ENCODE measurements at regions of chr17 and their contacts with region 1.

Region 1: GRCh38 chr17:39401412-39402243 is at the start of gene FBXL20:
- DNase-seq: peak; percentile 97
- ATAC-seq: peak; percentile 63
- H3K4me3 Mint-ChIP-seq: peak within 1 kb of the TSS; percentile 91
- H3K27ac Mint-ChIP-seq: peak within 1 kb of the TSS; percentile 92
- H3K4me1 Mint-ChIP-seq: peaks cover 48% of the 10 kb centered on the region
- H3K27me3 Mint-ChIP-seq: no peaks in the 10 kb centered on the region
- total RNA-seq, gene FBXL20: 16.9 to 18.9 TPM

Region 2: DNA sequence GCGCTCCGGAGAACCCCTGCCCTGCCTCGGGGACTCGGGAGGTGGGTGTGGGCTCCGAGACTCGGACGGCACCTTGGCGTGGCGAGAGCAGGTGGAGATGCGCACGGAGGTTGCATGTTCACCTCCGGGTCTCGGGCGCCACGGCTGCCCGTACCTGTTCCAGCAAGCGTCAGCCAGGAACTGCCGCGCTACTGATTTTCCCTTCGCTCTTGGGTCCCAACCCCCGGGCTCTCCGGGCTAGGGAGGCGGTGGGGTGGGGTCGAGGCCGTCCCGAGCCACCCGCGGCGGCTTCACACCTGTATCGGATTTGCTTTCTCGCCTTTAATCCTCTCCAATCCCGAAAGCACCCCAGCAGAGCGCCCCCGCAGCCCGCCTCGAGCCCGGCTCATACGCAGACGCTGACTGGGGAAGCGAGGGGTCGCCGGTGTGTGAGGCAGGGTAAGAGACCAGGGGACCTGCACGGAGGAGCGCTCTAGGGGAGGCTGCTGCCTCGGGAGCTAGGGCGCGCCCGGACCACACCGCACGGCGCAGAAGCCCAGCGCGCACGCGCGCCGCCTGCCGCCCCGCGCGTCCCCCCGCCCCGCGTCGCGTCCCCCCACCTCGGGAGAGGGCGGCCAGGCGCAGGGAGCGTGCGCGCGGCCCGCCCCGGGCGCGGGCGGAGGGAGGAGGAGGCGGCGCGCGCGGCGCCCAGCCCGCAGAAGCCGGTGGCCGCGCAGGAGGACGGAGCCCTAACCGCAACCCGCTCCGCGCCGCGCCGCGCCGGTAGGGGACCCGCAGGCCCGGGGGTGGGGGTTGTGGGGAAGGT is 1912.2 kb before region 1 on chr17 and contains the start of gene DUSP14:
- CTCF ChIA-PET with region 1: no interaction called
- POLR2A ChIA-PET with region 1: no interaction called
- intact Hi-C with region 1: loop called in 1 of 2 experiments (anchors 5 kb)
- DNase-seq: peak; percentile 88
- ATAC-seq: peak; percentile 74
- H3K4me3 Mint-ChIP-seq: peak within 1 kb of the TSS; percentile 88
- H3K27ac Mint-ChIP-seq: peak within 1 kb of the TSS; percentile 93
- H3K4me1 Mint-ChIP-seq: peaks cover 44% of the 10 kb centered on the region
- H3K27me3 Mint-ChIP-seq: no peaks in the 10 kb centered on the region
- total RNA-seq, gene DUSP14: 11.9 to 13.1 TPM

Region 3: GRCh38 chr17:39199820-39200069 is 201.9 kb before region 1 on chr17:
- CTCF ChIA-PET with region 1: interaction called, 3 read pairs
- POLR2A ChIA-PET with region 1: no interaction called
- intact Hi-C with region 1: loop called in 1 of 2 experiments (anchors 2 kb)
- DNase-seq: peak; percentile 95
- ATAC-seq: peak; percentile 69
- H3K4me3 Mint-ChIP-seq: peak overlapping the region; percentile 98
- H3K27ac Mint-ChIP-seq: peak overlapping the region; percentile 100
- H3K4me1 Mint-ChIP-seq: peaks cover 51% of the 10 kb centered on the region
- H3K27me3 Mint-ChIP-seq: no peaks in the 10 kb centered on the region

Region 4: DNA sequence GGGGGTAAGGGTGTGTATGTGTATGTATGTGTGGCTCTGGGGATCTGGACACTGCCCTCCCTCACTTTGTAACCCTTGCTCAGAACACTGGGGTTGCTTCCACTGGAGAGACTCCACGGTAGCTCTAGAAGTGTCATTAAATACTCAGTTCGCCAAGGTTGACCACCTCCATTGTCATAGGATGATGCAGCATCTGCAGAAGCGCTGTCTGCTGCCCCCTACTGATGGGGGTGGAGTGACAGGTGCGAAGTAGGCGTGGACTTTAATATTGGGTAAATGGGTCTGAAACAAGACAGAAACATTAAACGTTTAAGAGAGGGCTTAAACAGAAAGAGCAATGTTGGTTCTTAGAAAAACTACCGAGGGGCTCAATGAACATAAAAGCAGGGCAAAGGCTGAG is 140.3 kb before region 1 on chr17:
- CTCF ChIA-PET with region 1: no interaction called
- POLR2A ChIA-PET with region 1: no interaction called
- intact Hi-C with region 1: no loop called
- DNase-seq: peak; percentile 63
- ATAC-seq: peak; percentile 58
- H3K4me3 Mint-ChIP-seq: no peak overlapping the region
- H3K27ac Mint-ChIP-seq: no peak overlapping the region
- H3K4me1 Mint-ChIP-seq: no peaks in the 10 kb centered on the region
- H3K27me3 Mint-ChIP-seq: no peaks in the 10 kb centered on the region

Region 5: GRCh38 chr17:39461113-39461925 is 59.7 kb after region 1 on chr17 and contains the start of gene CDK12:
- CTCF ChIA-PET with region 1: interaction called, 3 read pairs
- POLR2A ChIA-PET with region 1: interaction called, 4 read pairs
- intact Hi-C with region 1: loop called (anchors 1 to 2 kb)
- DNase-seq: peak; percentile 97
- ATAC-seq: peak; percentile 91
- H3K4me3 Mint-ChIP-seq: peak within 1 kb of the TSS; percentile 91
- H3K27ac Mint-ChIP-seq: peak within 1 kb of the TSS; percentile 94
- H3K4me1 Mint-ChIP-seq: peaks cover 22% of the 10 kb centered on the region
- H3K27me3 Mint-ChIP-seq: no peaks in the 10 kb centered on the region
- total RNA-seq, gene CDK12: 65.9 to 83.3 TPM

Region 6: GRCh38 chr17:39813631-39814030 is 412.0 kb after region 1 on chr17:
- CTCF ChIA-PET with region 1: no interaction called
- POLR2A ChIA-PET with region 1: no interaction called
- intact Hi-C with region 1: no loop called
- DNase-seq: peak; percentile 66
- ATAC-seq: peak; percentile 90
- H3K4me3 Mint-ChIP-seq: peak overlapping the region; percentile 70
- H3K27ac Mint-ChIP-seq: peak overlapping the region; percentile 85
- H3K4me1 Mint-ChIP-seq: peaks cover 59% of the 10 kb centered on the region
- H3K27me3 Mint-ChIP-seq: no peaks in the 10 kb centered on the region

Region 7: GRCh38 chr17:39952680-39953470 is 551.2 kb after region 1 on chr17:
- CTCF ChIA-PET with region 1: no interaction called
- POLR2A ChIA-PET with region 1: no interaction called
- intact Hi-C with region 1: loop called in 1 of 2 experiments (anchors 10 kb)
- DNase-seq: peak; percentile 98
- ATAC-seq: peak; percentile 87
- H3K4me3 Mint-ChIP-seq: peak overlapping the region; percentile 73
- H3K27ac Mint-ChIP-seq: peak overlapping the region; percentile 69
- H3K4me1 Mint-ChIP-seq: peaks cover 12% of the 10 kb centered on the region
- H3K27me3 Mint-ChIP-seq: no peaks in the 10 kb centered on the region